ENCODE measurements at regions of chr14 and their contacts with region 1.

Region 1: GRCh38 chr14:50860478-50861086 is 11.3 kb upstream of the ABHD12B start:
- DNase-seq: peak; percentile 94
- ATAC-seq: peak; percentile 80
- H3K4me3 Mint-ChIP-seq: peak overlapping the region; percentile 76
- H3K27ac Mint-ChIP-seq: peak overlapping the region; percentile 82
- H3K4me1 Mint-ChIP-seq: peaks cover 13% of the 10 kb centered on the region
- H3K27me3 Mint-ChIP-seq: peaks cover 3% of the 10 kb centered on the region

Region 2: DNA sequence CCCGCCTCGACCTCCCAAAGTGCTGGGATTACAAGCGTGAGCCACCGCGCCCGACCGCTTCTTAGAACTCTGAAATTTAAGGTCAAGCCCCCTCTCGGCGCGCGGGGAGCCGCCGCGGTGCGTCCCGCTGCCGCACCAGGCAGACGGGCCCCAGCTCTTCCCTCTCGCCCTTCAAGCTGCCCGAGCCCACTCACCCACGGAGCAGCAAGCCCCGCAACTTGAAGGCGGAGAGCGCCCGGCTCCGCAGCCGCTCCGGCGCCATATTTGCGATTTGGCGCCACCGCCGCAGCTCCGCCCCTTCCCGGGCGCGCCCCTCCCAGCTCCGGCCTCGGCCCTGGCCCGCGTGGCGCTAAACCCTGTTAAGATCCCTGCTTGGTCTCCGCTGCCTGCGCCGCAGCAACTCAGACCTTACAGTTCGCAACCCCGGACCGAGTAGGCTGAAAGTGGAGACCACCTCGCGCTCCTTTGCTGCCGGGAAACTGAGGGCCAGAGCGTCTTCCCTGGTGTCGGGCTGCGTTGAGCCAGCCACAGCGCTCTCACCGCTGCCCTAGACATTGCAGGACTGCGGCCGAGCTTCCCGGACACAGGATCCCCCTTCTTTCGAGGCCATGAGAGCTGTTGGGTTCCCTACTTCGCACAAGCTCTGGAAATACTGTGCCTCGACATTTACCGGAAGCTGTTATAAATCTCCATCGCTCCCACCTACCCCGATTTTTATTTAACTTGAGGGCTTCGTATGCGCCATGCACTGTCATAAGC is 1172.5 kb before region 1 on chr14 and contains the start of gene POLE2:
- CTCF ChIA-PET with region 1: no interaction called
- POLR2A ChIA-PET with region 1: no interaction called
- intact Hi-C with region 1: no loop called
- DNase-seq: peak; percentile 88
- ATAC-seq: peak; percentile 85
- H3K4me3 Mint-ChIP-seq: peak within 1 kb of the TSS; percentile 87
- H3K27ac Mint-ChIP-seq: peak within 1 kb of the TSS; percentile 87
- H3K4me1 Mint-ChIP-seq: peaks cover 40% of the 10 kb centered on the region
- H3K27me3 Mint-ChIP-seq: no peaks in the 10 kb centered on the region
- total RNA-seq, gene POLE2: 43.0 to 46.5 TPM

Region 3: GRCh38 chr14:50619556-50620141 is 240.9 kb before region 1 on chr14:
- CTCF ChIA-PET with region 1: interaction called, 7 read pairs
- POLR2A ChIA-PET with region 1: no interaction called
- intact Hi-C with region 1: loop called (anchors 1 to 5 kb)
- DNase-seq: no peak
- ATAC-seq: peak; percentile 66
- H3K4me3 Mint-ChIP-seq: no peak overlapping the region
- H3K27ac Mint-ChIP-seq: no peak overlapping the region
- H3K4me1 Mint-ChIP-seq: no peaks in the 10 kb centered on the region
- H3K27me3 Mint-ChIP-seq: no peaks in the 10 kb centered on the region

Region 4: DNA sequence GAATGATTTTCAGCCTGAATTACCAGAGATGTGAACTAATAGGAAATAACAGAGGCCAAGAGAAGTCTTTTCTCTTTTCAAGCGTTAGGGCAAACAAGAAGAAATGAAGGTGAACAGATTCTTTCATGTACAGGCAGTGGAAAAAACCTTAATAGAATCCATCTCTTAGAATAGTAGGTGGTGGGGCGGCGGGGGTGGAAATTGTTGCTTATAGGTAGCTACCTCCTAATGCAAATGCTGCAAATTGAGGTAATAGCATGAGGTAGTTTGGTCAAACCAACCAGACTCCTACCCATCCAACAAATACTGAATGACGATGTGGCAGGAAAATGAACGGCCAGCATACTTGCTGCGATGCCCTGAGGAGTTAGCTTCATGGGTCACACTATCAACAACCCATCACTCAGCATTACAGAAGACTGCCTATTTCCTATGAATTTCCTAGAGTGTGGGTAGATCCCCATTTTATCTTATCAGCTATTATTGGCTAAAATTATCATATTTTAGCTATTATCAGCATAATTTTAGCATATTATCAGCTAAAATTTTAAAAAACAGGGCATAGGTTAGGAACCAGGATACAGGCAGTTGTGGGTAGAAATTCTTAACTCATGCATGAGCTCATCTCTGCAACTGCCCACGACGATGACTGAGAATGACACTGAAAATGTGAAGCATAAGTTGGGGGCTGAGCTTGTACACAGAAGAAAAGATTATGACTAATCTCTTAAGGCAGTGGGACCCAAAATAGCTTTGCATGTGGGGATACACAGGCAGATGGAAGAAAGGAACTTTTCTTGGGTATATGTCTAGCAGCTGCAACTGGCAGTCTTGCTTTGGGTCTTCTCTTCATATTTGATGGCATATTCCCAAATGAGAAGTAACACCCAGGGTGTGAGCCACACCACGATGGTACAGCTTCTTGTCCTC is 98.3 kb before region 1 on chr14:
- CTCF ChIA-PET with region 1: interaction called, 16 read pairs
- POLR2A ChIA-PET with region 1: no interaction called
- intact Hi-C with region 1: no loop called
- DNase-seq: peak; percentile 79
- ATAC-seq: peak; percentile 99
- H3K4me3 Mint-ChIP-seq: no peak overlapping the region
- H3K27ac Mint-ChIP-seq: peak overlapping the region; percentile 58
- H3K4me1 Mint-ChIP-seq: peaks cover 31% of the 10 kb centered on the region
- H3K27me3 Mint-ChIP-seq: no peaks in the 10 kb centered on the region

Region 5: GRCh38 chr14:50785457-50786063 is 75.0 kb before region 1 on chr14:
- CTCF ChIA-PET with region 1: interaction called, 44 read pairs
- POLR2A ChIA-PET with region 1: interaction called, 3 read pairs
- intact Hi-C with region 1: loop called in 1 of 2 experiments (anchors 1 kb)
- DNase-seq: no peak
- ATAC-seq: no peak
- H3K4me3 Mint-ChIP-seq: no peak overlapping the region
- H3K27ac Mint-ChIP-seq: peak overlapping the region; percentile 6
- H3K4me1 Mint-ChIP-seq: peaks cover 66% of the 10 kb centered on the region
- H3K27me3 Mint-ChIP-seq: no peaks in the 10 kb centered on the region

Region 6: DNA sequence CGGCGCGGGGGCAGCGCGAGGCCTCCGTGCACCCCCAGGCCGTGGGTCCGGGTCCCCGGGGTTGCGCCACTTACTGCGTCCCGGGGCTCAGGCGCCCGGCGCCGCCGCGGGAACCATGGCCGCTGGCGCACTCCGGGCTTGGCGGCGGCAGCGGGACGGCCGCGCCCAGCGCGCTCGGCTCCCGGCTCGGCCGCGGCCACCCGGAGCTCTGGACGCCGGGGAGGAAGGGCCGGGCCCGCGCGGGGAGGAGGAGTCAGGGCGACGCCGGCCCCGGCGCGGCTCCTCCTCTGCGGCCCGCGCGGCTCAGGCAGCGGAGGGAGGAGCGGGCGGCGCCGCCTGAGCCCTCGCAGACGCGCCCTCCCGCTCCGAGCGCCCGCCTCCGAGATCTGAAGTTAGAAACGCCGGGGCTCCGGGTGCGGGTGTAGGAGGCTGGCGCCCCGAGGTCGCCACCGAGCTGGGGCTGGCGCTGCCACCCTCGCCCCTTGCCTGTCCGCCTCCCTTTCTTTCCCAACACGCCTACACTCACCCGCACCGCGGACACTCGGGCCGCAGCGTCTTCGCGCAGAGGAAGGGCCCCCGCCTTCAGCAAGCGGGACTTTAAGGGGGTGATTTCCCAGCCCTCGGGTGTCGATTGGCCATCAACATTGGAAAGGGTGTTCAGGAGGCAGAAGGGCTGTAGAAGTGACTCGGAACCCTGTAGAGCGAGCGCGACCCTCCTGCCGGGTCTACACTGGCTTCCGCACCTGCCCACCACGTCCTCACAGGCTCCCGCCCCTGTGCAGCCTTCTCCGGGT is 29.5 kb before region 1 on chr14 and contains the start of gene NIN:
- CTCF ChIA-PET with region 1: interaction called, 17 read pairs
- POLR2A ChIA-PET with region 1: no interaction called
- intact Hi-C with region 1: loop called (anchors 1 kb)
- DNase-seq: peak; percentile 84
- ATAC-seq: peak; percentile 89
- H3K4me3 Mint-ChIP-seq: peak within 1 kb of the TSS; percentile 91
- H3K27ac Mint-ChIP-seq: peak within 1 kb of the TSS; percentile 88
- H3K4me1 Mint-ChIP-seq: peaks cover 56% of the 10 kb centered on the region
- H3K27me3 Mint-ChIP-seq: peaks cover 6% of the 10 kb centered on the region
- total RNA-seq, gene NIN: 47.5 to 53.8 TPM

Region 7: DNA sequence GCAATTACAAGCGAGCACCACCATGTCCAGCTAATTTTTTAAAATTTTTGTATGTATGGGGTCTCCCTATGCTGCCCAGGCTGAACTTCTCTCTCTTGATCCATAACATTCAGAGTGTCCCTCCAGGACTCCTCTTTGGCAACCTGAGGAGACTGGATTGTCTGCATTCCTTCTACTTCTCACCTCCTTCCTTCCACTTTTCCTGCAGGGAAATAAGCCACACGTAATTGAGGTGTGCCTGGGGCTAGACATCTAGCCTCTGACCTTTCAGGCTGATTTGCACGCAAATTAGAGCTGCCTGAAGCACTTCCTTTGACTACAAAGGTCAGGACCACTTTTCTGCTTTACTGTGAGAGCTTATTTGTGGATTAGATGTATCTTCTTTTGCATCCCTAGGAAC is 50.0 kb after region 1 on chr14:
- CTCF ChIA-PET with region 1: no interaction called
- POLR2A ChIA-PET with region 1: no interaction called
- intact Hi-C with region 1: no loop called
- DNase-seq: no peak
- ATAC-seq: no peak
- H3K4me3 Mint-ChIP-seq: no peak overlapping the region
- H3K27ac Mint-ChIP-seq: no peak overlapping the region
- H3K4me1 Mint-ChIP-seq: no peaks in the 10 kb centered on the region
- H3K27me3 Mint-ChIP-seq: peaks cover 13% of the 10 kb centered on the region